ENCODE measurements at regions of chr3 and their contacts with region 1.

Region 1: GRCh38 chr3:141303481-141304223 is 64.7 kb upstream of the ZBTB38 start:
- DNase-seq: no peak
- ATAC-seq: peak; percentile 88
- H3K4me3 Mint-ChIP-seq: no peak overlapping the region
- H3K27ac Mint-ChIP-seq: no peak overlapping the region
- H3K4me1 Mint-ChIP-seq: peaks cover 2% of the 10 kb centered on the region
- H3K27me3 Mint-ChIP-seq: no peaks in the 10 kb centered on the region
- CTCF ChIP-seq: no peak

Region 2: GRCh38 chr3:141360888-141361598 is 57.4 kb after region 1 on chr3:
- CTCF ChIA-PET with region 1: interaction called, 12 read pairs
- POLR2A ChIA-PET with region 1: no interaction called
- intact Hi-C with region 1: no loop called
- DNase-seq: no peak
- ATAC-seq: peak; percentile 49
- H3K4me3 Mint-ChIP-seq: peak overlapping the region; percentile 13
- H3K27ac Mint-ChIP-seq: no peak overlapping the region
- H3K4me1 Mint-ChIP-seq: peaks cover 7% of the 10 kb centered on the region
- H3K27me3 Mint-ChIP-seq: peaks cover 3% of the 10 kb centered on the region
- CTCF ChIP-seq: no peak

Region 3: GRCh38 chr3:141644931-141645330 is 341.3 kb after region 1 on chr3:
- CTCF ChIA-PET with region 1: no interaction called
- POLR2A ChIA-PET with region 1: no interaction called
- intact Hi-C with region 1: loop called (anchors 1 kb)
- DNase-seq: peak; percentile 43
- ATAC-seq: peak; percentile 70
- H3K4me3 Mint-ChIP-seq: no peak overlapping the region
- H3K27ac Mint-ChIP-seq: no peak overlapping the region
- H3K4me1 Mint-ChIP-seq: no peaks in the 10 kb centered on the region
- H3K27me3 Mint-ChIP-seq: peaks cover 5% of the 10 kb centered on the region
- CTCF ChIP-seq: no peak

Measured in activated B cell treated with CpG ODN at 0.5 μM for 24 hours (primary cell).